Mammary epithelial cell (primary cell): ENCODE measurements at regions of chr4 and their contacts with region 1.

Region 1: DNA sequence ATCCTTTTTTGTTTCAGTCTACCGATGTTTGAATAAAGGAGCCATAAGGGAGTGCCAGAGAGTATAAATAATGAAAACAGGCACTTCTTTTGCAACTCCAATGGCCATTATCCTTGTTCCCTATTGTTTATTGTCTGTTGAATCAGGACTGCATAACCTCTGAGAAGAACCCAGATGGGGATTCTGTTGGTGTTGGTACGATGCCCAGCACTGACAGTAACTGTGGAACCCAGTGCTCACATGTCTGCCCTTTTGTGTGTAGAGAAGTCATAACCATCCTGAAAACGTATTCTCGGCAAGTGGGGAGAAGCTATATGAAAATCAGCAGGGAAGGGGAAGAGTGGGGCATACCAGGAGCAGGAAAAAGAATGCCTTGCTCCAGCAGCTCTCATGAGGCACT is 195.1 kb upstream of the EDNRA start:
- DNase-seq: no peak
- H3K4me3 ChIP-seq: no peak overlapping the region
- H3K27ac ChIP-seq: no peak overlapping the region
- H3K4me1 ChIP-seq: peaks cover 17% of the 10 kb centered on the region
- H3K27me3 ChIP-seq: no peaks in the 10 kb centered on the region
- CTCF ChIP-seq: no peak

Region 2: GRCh38 chr4:147581601-147582350 is 296.0 kb after region 1 on chr4:
- CTCF ChIA-PET with region 1: no interaction called
- dilution Hi-C with region 1: no loop called
- in situ Hi-C with region 1: no loop called
- intact Hi-C with region 1: loop called (anchors 5 kb)
- DNase-seq: peak; percentile 64
- H3K4me3 ChIP-seq: no peak overlapping the region
- H3K27ac ChIP-seq: peak overlapping the region; percentile 39
- H3K4me1 ChIP-seq: peaks cover 50% of the 10 kb centered on the region
- H3K27me3 ChIP-seq: no peaks in the 10 kb centered on the region
- CTCF ChIP-seq: no peak